H1 (cell line): ENCODE measurements at regions of chr1 and their contacts with region 1.

Region 1: DNA sequence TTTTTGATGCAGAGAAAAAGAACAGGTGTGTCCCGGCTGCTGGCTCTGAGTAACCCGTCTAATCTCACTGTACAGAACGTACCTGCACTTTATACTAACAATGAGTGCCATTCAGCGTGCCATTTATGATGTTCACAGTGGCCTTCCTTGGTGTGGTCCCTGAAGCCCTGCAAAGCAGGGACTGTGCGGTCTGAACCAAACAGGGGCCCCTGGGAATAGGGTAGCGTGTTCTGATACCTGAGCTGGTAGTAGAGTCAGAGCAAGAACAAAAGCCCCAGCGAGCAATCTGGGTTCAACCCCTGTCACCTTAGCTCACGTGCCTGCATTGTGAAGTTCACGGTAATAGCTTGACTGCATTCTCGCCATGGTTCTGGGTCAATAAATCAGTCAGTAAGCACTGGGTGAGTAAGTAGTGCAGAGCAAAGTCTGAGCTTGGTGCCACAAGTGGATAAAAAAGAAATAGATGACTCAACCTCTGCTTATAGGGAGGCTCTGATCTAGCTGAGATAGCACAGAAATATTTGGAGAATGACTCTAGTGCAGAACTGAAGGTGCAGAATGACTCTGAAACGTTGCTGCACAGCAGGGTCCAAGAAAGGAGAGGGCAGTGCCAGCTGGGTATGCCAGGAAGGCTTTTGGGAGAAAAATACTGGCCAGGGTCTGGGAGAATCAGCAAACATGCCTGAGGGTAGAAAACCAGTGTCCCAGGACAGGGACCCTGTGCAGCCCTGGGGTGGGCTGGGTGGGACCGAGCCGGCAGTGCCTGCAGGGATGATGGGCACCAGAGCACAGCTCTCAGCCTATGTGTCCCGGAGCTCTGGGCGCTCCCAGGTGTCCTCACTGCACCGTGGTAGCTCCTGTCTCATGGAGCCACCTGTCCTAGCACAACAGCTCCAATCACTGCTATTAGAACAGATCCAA is 125.9 kb downstream of the RHOU start:
- DNase-seq: no peak
- H3K4me3 ChIP-seq: no peak overlapping the region
- H3K27ac ChIP-seq: no peak overlapping the region
- H3K4me1 ChIP-seq: peaks cover 5 to 18% (median 12%) of the 10 kb centered on the region in 4 experiments; a peak in 6 of 7 replicates
- H3K27me3 ChIP-seq: no peaks in the 10 kb centered on the region
- CTCF ChIP-seq: no peak
- EP300 ChIP-seq: no peak
- POLR2A ChIP-seq: no peak
- RAD21 ChIP-seq: no peak

Region 2: GRCh38 chr1:228778961-228779360 is 82.2 kb before region 1 on chr1:
- CTCF ChIA-PET with region 1: no interaction called
- POLR2A ChIA-PET with region 1: no interaction called
- DNase-seq: no peak
- H3K4me3 ChIP-seq: no peak overlapping the region
- H3K27ac ChIP-seq: no peak overlapping the region
- H3K4me1 ChIP-seq: no peaks in the 10 kb centered on the region
- H3K27me3 ChIP-seq: no peaks in the 10 kb centered on the region; a peak in 1 of 7 replicates
- CTCF ChIP-seq: no peak
- EP300 ChIP-seq: no peak
- POLR2A ChIP-seq: no peak
- RAD21 ChIP-seq: no peak

Region 3: GRCh38 chr1:228849011-228849541 is 12.1 kb before region 1 on chr1:
- CTCF ChIA-PET with region 1: interaction called, 14 read pairs
- POLR2A ChIA-PET with region 1: interaction called, 5 read pairs
- DNase-seq: peak in 1 of 2 experiments; percentile 38
- H3K4me3 ChIP-seq: no peak overlapping the region
- H3K27ac ChIP-seq: no peak overlapping the region
- H3K4me1 ChIP-seq: peaks cover 4 to 23% (median 18%) of the 10 kb centered on the region in 4 experiments
- H3K27me3 ChIP-seq: no peaks in the 10 kb centered on the region
- CTCF ChIP-seq: no peak
- EP300 ChIP-seq: no peak
- POLR2A ChIP-seq: no peak
- RAD21 ChIP-seq: no peak

Region 4: DNA sequence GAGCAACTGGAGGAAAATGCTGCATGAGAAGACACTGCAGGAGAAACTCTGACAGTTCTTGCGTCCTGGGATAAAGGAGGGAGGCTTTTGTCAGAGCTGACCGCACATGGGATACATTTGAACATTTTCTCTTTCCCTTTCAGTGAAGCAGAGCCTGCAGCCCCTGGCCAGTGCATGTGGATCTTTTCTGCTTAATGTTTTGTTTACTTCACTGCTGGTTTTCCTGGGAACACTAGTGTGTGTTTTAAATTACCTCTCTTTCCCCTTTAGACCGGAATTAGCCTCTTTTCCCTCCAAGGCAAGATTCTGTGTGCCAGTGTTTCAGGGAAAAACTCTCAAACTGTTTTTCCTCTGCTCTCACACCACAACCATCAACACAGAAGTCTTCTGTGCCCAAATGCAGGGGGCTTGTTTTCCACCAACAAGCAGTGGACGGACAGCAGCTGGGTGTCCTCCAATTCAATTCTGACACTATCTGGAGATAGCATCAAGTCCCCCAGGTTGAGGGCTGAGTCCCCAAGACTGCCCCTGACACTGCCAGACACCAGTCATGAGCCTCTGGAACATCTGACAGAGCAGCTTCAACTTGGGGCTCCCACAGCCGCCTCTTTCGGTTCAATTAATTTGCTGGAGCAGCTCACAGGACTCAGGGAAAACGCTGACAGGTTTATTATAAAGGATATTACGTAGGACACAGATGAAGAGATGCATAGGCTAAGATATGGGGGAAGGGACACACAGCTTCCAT is 10.3 kb after region 1 on chr1:
- CTCF ChIA-PET with region 1: interaction called, 11 read pairs
- POLR2A ChIA-PET with region 1: no interaction called
- DNase-seq: no peak
- H3K4me3 ChIP-seq: no peak overlapping the region
- H3K27ac ChIP-seq: no peak overlapping the region
- H3K4me1 ChIP-seq: peaks cover 0 to 7% (median 4%) of the 10 kb centered on the region in 4 experiments; a peak in 4 of 7 replicates
- H3K27me3 ChIP-seq: no peaks in the 10 kb centered on the region; a peak in 1 of 7 replicates
- CTCF ChIP-seq: no peak
- EP300 ChIP-seq: no peak
- POLR2A ChIP-seq: no peak
- RAD21 ChIP-seq: no peak

Region 5: DNA sequence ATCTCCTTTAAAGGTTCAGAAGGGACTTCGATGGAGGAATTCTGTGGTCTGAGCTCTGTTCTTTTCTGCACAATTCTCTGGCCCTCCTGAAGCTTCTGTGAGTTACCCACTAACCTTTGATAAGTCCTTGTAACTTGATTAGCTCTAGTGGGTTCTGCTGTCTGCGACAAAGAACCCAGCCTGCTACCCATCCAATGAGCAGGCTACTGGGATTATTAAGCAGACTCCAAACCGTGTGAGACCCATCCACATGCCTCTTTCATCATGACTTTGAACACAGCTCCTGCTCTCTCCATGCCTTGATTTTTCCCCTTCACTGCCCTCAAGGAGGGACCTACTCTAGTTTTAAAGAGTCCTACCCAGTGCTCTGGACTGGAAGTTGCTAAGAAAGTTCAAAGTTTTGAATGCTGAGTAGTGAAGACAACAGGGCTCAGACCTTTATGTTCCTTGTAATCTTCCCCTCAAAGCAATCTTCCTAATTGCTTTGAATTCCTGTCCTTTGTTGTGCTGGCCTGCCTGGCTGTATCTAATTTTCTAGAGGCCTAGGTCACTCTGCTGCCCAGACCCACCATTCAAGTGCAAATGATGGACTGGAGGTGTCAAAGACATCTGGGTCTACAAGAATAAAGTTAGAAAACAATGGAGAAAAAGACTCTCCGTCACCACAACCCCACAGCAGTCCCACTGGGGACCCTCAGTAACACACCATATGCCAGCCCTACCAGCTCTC is 21.0 kb after region 1 on chr1:
- CTCF ChIA-PET with region 1: no interaction called
- POLR2A ChIA-PET with region 1: no interaction called
- DNase-seq: peak in 1 of 2 experiments; percentile 36
- H3K4me3 ChIP-seq: no peak overlapping the region
- H3K27ac ChIP-seq: no peak overlapping the region
- H3K4me1 ChIP-seq: peaks cover 0 to 4% (median 1%) of the 10 kb centered on the region in 4 experiments; a peak in 5 of 7 replicates
- H3K27me3 ChIP-seq: no peaks in the 10 kb centered on the region
- CTCF ChIP-seq: no peak
- EP300 ChIP-seq: no peak
- POLR2A ChIP-seq: no peak
- RAD21 ChIP-seq: no peak